Activated CD4-positive, alpha-beta T cell treated with anti-CD3 and anti-CD28 coated beads, Interleukin-2, amount 10 ng/mL, durations not matched to agents 24 days and 14 days (primary cell): ENCODE measurements at regions of chr20 and their contacts with region 1.

Region 1: DNA sequence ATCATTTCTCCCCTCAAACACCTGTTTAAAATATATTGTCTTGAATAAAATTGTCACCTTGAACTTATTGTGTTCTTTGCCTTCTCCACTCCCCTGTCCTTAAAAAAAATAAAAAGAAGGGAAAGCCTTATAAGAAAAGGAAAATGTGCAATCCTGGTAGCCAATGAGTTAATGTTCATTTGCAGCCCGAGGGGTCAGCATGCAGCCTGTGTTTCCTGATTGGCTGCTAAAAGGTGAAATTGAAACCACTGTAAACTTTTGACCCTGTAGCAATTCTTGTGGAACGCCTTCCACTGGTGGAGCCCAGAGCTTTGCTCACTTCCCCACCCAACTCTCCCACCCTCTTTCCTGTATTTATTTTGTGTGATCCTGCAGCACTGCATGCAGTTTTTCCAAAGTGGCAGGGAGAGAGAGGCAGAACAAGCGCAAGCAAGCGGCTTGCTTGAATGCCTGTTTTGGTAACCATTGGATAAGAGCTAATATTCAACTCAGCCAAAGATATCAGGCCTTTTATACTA is 74.9 kb downstream of the NCOA3 start:
- DNase-seq: peak; percentile 71
- H3K4me3 Mint-ChIP-seq: peak overlapping the region; percentile 74
- H3K27ac Mint-ChIP-seq: peak overlapping the region; percentile 82
- H3K4me1 Mint-ChIP-seq: peaks cover 64% of the 10 kb centered on the region
- H3K27me3 Mint-ChIP-seq: no peaks in the 10 kb centered on the region

Region 2: GRCh38 chr20:47392015-47392720 is 184.4 kb before region 1 on chr20:
- intact Hi-C with region 1: no loop called
- DNase-seq: no peak
- H3K4me3 Mint-ChIP-seq: no peak overlapping the region
- H3K27ac Mint-ChIP-seq: peak overlapping the region; percentile 65
- H3K4me1 Mint-ChIP-seq: peaks cover 19% of the 10 kb centered on the region
- H3K27me3 Mint-ChIP-seq: no peaks in the 10 kb centered on the region

Region 3: GRCh38 chr20:47561180-47561579 is 15.4 kb before region 1 on chr20:
- intact Hi-C with region 1: no loop called
- DNase-seq: no peak
- H3K4me3 Mint-ChIP-seq: no peak overlapping the region
- H3K27ac Mint-ChIP-seq: no peak overlapping the region
- H3K4me1 Mint-ChIP-seq: peaks cover 50% of the 10 kb centered on the region
- H3K27me3 Mint-ChIP-seq: no peaks in the 10 kb centered on the region

Region 4: DNA sequence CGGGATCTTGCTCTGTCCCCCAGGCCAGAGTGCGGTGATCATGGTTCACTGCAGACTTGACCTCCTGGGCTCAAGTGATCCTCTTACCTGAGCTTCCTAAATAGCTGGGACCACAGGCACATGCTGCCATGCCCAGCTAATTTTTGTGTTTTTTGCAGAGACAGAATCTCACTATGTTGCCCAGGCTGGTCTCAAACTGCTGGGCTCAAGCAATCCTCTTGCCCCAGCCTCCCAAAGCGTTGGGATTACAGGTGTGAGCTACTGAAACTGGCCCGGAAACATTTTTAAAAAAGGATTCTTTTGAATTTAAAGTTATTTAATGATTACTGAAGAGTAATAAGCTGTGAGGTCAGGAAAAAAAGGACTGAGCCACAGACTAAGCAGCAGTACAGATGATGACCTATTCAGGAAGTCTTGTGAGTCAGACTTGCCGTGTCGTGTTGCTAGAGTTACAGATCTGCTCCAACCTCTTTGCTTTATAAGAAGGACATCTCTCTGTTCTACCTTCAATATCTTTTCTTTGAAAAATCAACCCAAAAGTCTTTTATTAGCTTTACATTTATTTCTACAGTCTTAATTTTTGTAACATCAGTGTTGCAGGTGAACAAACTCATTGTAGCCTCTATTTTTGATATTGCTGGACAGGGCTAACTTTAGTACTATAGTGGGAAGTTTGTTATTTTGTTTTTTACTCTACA is 33.8 kb after region 1 on chr20:
- intact Hi-C with region 1: loop called (anchors 5 kb)
- DNase-seq: peak; percentile 90
- H3K4me3 Mint-ChIP-seq: peak overlapping the region; percentile 78
- H3K27ac Mint-ChIP-seq: peak overlapping the region; percentile 95
- H3K4me1 Mint-ChIP-seq: peaks cover 68% of the 10 kb centered on the region
- H3K27me3 Mint-ChIP-seq: no peaks in the 10 kb centered on the region

Region 5: GRCh38 chr20:48025031-48025515 is 448.5 kb after region 1 on chr20:
- intact Hi-C with region 1: no loop called
- DNase-seq: no peak
- H3K4me3 Mint-ChIP-seq: no peak overlapping the region
- H3K27ac Mint-ChIP-seq: no peak overlapping the region
- H3K4me1 Mint-ChIP-seq: no peaks in the 10 kb centered on the region
- H3K27me3 Mint-ChIP-seq: peaks cover 6% of the 10 kb centered on the region